ENCODE measurements at regions of chr11 and their contacts with region 1.

Region 1: DNA sequence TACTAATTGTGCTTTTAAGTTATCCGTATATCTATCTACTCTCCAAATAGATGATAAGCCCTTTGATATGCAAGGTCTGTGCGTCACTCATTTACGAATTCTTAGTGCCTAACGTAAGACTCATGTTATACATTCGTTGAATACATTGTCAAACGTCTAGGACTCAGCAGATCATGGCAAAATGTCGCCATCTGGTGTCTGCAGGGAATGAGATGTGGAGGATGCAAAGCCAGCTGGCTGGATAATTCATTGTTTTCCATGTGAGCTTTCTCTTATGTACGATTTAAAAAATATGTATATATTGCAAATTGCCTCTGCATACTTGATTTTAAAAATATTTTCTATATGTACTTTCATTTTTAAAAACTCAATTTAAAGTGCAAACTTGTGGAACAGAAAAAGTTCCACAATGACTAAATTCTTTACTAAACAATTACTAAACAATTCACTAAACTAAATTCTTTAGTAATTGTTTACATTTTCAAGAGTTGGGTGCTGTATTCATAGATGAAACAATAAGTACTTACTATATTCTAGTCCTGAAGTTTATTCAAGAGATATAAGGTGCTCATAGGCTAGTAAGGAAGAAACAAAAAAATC is 33.8 kb downstream of the ZNF202 start:
- DNase-seq: peak; percentile 26
- H3K4me3 ChIP-seq: no peak overlapping the region
- CTCF ChIP-seq: peak; percentile 71

Region 2: DNA sequence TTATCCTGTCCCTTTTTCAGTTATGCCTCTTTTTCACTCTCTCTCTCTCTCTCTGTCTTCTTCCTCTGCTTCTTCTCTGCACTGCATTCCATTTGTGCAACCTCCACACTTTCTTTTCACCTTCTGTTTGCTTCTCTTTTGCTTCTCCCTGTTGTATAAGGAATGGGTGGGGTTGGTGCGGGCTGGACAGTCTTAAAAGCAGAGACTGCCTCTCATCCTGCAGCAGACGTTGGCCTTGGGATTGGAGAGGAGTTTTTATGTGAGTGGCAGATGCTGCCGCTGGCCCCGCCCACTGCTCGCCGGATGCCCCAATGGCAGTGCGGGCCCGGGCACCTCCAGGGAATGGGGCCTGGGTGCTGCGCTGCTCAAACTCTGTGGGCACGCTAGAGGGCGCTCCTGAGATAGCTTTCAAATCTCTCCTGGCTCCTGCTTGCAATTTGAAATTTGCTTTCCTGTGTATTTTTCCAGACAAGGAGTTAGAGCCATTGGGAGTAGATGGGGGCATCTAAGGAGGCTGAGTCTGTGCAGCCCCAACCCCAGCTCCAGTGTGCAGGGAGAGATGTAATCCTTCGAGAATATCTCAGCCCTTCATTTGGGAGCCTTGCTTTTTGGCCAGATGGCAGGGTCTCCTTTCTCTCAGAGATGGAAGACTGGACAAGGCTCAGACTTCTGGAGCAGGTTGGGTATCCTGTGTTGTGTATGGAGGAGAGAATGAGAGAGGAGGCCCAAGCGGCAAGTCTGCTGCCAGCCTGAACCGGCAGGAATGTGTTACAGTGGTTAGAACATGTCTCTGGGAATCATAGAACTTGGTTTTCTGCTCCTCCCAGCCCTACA is 196.5 kb before region 1 on chr11:
- CTCF ChIA-PET with region 1: interaction called, 18 read pairs
- POLR2A ChIA-PET with region 1: no interaction called
- DNase-seq: peak; percentile 70
- H3K4me3 ChIP-seq: peak overlapping the region; percentile 25
- CTCF ChIP-seq: peak; percentile 95

Region 3: GRCh38 chr11:123628936-123629683 is 78.6 kb before region 1 on chr11:
- CTCF ChIA-PET with region 1: interaction called, 305 read pairs
- POLR2A ChIA-PET with region 1: no interaction called
- DNase-seq: no peak
- H3K4me3 ChIP-seq: no peak overlapping the region
- CTCF ChIP-seq: no peak

Region 4: GRCh38 chr11:123654566-123655081 is 53.1 kb before region 1 on chr11 and contains the start of gene SCN3B:
- CTCF ChIA-PET with region 1: interaction called, 27 read pairs
- POLR2A ChIA-PET with region 1: no interaction called
- DNase-seq: no peak
- H3K4me3 ChIP-seq: peak within 1 kb of the TSS; percentile 62
- CTCF ChIP-seq: no peak

Region 5: GRCh38 chr11:123719452-123719851 is 11.7 kb after region 1 on chr11:
- CTCF ChIA-PET with region 1: interaction called, 113 read pairs
- POLR2A ChIA-PET with region 1: no interaction called
- DNase-seq: no peak
- H3K4me3 ChIP-seq: no peak overlapping the region
- CTCF ChIP-seq: no peak

Region 6: GRCh38 chr11:123822032-123822431 is 114.3 kb after region 1 on chr11:
- CTCF ChIA-PET with region 1: no interaction called
- POLR2A ChIA-PET with region 1: no interaction called
- DNase-seq: no peak
- H3K4me3 ChIP-seq: no peak overlapping the region
- CTCF ChIP-seq: no peak